ENCODE measurements at regions of chr5 and their contacts with region 1.

Region 1: DNA sequence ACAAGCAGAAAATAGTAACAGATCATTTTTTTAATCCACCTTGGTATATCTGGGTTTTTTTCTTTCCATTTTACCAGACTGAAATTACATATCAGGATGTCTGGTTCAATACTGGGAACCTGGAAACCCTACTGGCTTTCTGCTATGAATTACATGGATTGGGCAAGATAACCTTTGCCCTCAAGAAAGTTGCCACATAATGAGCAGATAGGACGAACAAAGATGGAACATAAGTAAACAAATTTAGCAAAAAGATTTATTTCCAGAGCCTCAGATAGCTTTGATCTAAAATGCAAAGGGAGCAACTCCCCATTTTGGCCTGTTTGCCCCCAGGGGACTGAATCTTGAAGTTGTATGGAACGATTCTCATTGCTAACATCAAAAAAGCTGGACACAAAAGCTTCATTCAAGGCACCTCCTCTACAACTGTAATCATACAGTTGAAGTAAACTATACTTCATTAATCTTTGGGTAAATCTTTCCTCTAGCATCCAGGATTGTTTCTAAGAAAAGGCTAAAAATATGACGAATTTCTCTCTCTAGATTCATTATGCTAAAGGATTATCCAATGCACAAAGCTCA is 131.6 kb upstream of the PTGER4 start:
- DNase-seq: peak; percentile 50 to 64
- H3K4me3 ChIP-seq: no peak overlapping the region
- H3K4me3 Mint-ChIP-seq: no peak overlapping the region
- H3K27ac Mint-ChIP-seq: no peak overlapping the region
- H3K4me1 ChIP-seq: peaks cover 21% of the 10 kb centered on the region
- H3K4me1 Mint-ChIP-seq: peaks cover 8% of the 10 kb centered on the region
- H3K27me3 ChIP-seq: no peaks in the 10 kb centered on the region
- H3K27me3 Mint-ChIP-seq: no peaks in the 10 kb centered on the region
- CTCF ChIP-seq: no peak

Region 2: DNA sequence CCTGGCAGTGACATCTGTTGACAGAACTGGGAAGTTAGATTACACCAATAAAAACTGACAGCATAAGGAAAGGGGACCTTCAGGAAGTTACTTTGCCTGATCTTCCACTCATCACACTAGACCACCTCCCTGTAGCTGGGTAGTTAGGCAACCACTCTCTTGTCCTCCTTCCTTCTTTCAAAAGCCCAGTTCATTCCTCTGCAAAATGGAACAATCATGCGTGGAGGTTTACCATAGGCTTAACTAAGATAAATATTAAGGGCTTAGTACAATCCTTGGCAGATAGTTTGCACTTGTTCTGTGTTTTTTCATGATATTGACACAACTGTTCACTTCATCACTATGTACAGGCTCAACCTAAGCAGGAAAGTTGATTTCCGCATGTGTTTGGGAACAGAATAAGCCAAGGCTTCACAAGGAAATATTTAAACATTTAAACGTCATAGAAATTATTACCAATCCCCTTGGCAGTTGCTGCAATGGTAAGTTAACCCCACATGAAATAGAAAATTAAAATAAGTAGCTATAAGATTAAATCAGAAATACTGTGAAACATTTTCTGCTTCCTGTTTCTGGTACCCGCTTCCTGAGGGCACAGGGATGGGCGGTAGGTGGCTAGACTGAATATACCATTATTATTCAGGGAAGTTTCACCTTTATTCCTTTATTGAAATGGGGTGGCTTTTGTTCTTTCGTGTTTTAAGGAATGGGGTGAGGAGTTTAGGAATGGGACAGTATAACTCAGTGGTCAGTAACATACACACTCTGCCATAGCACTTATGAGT is 121.7 kb after region 1 on chr5:
- CTCF ChIA-PET with region 1: no interaction called
- POLR2A ChIA-PET with region 1: no interaction called
- intact Hi-C with region 1: loop called (anchors 5 kb)
- DNase-seq: peak in 1 of 2 experiments; percentile 15
- H3K4me3 ChIP-seq: no peak overlapping the region
- H3K4me3 Mint-ChIP-seq: no peak overlapping the region
- H3K27ac Mint-ChIP-seq: no peak overlapping the region
- H3K4me1 ChIP-seq: no peaks in the 10 kb centered on the region
- H3K4me1 Mint-ChIP-seq: peaks cover 6% of the 10 kb centered on the region
- H3K27me3 ChIP-seq: peaks cover 4% of the 10 kb centered on the region
- H3K27me3 Mint-ChIP-seq: peaks cover 11% of the 10 kb centered on the region
- CTCF ChIP-seq: no peak